Posterior vena cava (tissue), 2 donors: ENCODE measurements at regions of chr15 and their contacts with region 1.

Region 1: DNA sequence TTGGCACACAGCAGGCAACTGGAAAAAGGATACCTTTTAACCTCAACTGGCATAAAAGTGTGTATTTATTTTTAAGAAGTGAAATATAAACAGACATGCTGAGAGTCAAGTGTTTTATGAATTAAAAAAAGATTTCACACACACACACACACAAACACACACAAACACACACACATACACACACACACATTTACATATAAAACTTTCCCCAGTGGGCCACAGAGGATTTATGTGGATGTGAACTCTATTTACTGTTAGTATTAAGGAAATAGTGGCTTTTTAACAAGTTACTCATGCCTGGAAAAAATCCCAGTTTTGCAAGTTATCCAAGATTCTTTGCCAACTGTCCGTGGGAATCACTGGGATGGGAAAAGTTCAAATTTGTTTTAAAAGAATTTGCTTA is 725.9 kb upstream of the NR2F2 start:
- DNase-seq: no peak

Region 2: DNA sequence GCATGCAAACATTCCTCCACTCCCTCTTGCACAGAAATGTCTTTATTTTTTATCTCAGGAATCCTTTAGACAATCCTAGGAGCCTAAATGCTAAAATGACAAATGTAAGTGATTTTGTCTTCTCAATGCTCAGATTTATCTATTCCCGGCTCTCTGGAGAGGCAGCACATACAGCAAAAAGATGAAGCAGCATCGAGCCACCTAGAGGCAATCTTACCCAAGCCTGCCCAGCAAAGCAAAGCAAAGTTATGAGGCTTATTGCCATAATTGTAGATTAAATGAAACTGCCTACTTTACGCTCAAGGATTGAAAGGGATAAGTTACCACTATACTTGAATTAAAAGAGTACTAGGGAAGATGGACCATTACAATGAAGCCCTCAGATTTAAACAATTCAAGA is 24.5 kb before region 1 on chr15:
- intact Hi-C with region 1: loop called in 1 of 2 experiments (anchors 1 kb)
- DNase-seq: no peak